ENCODE measurements at regions of chr15 and their contacts with region 1.

Region 1: GRCh38 chr15:29978411-29979382 is 104.1 kb upstream of the GOLGA8J start:
- DNase-seq: peak; percentile 33
- H3K4me3 ChIP-seq: no peak overlapping the region
- H3K27ac ChIP-seq: no peak overlapping the region
- H3K4me1 ChIP-seq: no peaks in the 10 kb centered on the region
- H3K27me3 ChIP-seq: no peaks in the 10 kb centered on the region
- CTCF ChIP-seq: no peak

Region 2: GRCh38 chr15:29859973-29860715 is 118.6 kb before region 1 on chr15:
- CTCF ChIA-PET with region 1: no interaction called
- dilution Hi-C with region 1: no loop called
- in situ Hi-C with region 1: no loop called
- intact Hi-C with region 1: no loop called
- DNase-seq: peak; percentile 70
- H3K4me3 ChIP-seq: no peak overlapping the region
- H3K27ac ChIP-seq: peak overlapping the region; percentile 44
- H3K4me1 ChIP-seq: peaks cover 23% of the 10 kb centered on the region
- H3K27me3 ChIP-seq: no peaks in the 10 kb centered on the region
- CTCF ChIP-seq: no peak

Region 3: GRCh38 chr15:29959384-29960137 is 19.1 kb before region 1 on chr15:
- CTCF ChIA-PET with region 1: no interaction called
- dilution Hi-C with region 1: no loop called
- in situ Hi-C with region 1: no loop called
- intact Hi-C with region 1: loop called (anchors 2 kb)
- DNase-seq: no peak
- H3K4me3 ChIP-seq: no peak overlapping the region
- H3K27ac ChIP-seq: no peak overlapping the region
- H3K4me1 ChIP-seq: no peaks in the 10 kb centered on the region
- H3K27me3 ChIP-seq: no peaks in the 10 kb centered on the region
- CTCF ChIP-seq: no peak